ENCODE measurements at regions of chr11 and their contacts with region 1.

Region 1: GRCh38 chr11:77066229-77067042 is at the start of gene CAPN5:
- DNase-seq: peak; percentile 68 to 93 (median 88)
- ATAC-seq: peak; percentile 91
- H3K4me3 ChIP-seq: peak within 1 kb of the TSS; percentile 56 to 87
- H3K4me3 Mint-ChIP-seq: peak within 1 kb of the TSS; percentile 83
- H3K27ac ChIP-seq: peak within 1 kb of the TSS; percentile 32 to 48
- H3K27ac Mint-ChIP-seq: peak within 1 kb of the TSS; percentile 69
- H3K4me1 ChIP-seq: peaks cover 22% of the 10 kb centered on the region
- H3K4me1 Mint-ChIP-seq: peaks cover 25% of the 10 kb centered on the region
- H3K27me3 ChIP-seq: no peaks in the 10 kb centered on the region
- H3K27me3 Mint-ChIP-seq: no peaks in the 10 kb centered on the region
- CTCF ChIP-seq: peak; percentile 40
- total RNA-seq, gene CAPN5: 6.5 to 7.4 TPM

Region 2: DNA sequence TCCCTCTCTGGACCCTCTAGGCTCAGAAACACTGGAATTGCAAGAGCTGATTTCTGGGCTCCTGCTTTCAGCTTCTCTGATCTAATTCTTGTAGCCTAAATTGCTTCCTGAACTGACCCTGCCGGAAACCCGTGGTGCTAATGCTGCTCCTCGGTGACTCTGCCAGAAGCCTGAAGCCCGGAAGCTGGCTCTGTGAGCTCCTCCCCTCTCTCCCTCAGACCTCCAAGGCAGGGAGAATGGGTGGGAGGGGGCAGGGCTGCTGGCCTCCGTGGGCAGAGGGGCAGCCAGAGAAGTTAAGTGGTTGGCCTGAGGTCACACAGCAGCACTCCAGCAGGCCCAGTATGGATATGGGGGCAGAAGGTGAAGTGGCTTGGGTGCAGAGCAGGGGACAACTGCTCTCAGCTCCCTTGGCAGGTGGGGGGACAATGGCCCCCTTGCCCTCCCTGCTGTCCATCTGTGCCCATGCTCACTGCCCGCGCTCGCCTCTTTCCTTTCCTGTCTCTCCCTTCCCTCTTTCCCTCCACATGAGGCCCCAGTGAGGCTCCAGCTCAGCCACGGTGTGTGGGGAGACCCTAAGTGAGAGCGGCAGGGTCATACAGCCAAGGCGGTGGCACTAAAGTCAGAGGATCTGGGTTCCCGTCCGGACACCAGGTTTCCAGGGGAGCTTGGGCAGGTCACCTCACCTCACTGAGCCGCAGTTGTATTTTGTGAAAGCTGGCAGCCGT is 16.6 kb after region 1 on chr11:
- CTCF ChIA-PET with region 1: interaction called, 3 read pairs
- POLR2A ChIA-PET with region 1: interaction called, 3 read pairs
- intact Hi-C with region 1: loop called in 1 of 2 experiments (anchors 1 kb)
- DNase-seq: peak in 8 of 9 experiments; percentile 38 to 76 (median 57)
- ATAC-seq: peak; percentile 93
- H3K4me3 ChIP-seq: peak overlapping the region; percentile 13 to 48
- H3K4me3 Mint-ChIP-seq: peak overlapping the region; percentile 75
- H3K27ac ChIP-seq: peak overlapping the region; percentile 73 to 81
- H3K27ac Mint-ChIP-seq: peak overlapping the region; percentile 97
- H3K4me1 ChIP-seq: peaks cover 25% of the 10 kb centered on the region
- H3K4me1 Mint-ChIP-seq: peaks cover 27% of the 10 kb centered on the region
- H3K27me3 ChIP-seq: no peaks in the 10 kb centered on the region
- H3K27me3 Mint-ChIP-seq: no peaks in the 10 kb centered on the region
- CTCF ChIP-seq: no peak

Region 3: GRCh38 chr11:77411717-77412441 is 345.4 kb after region 1 on chr11:
- CTCF ChIA-PET with region 1: no interaction called
- POLR2A ChIA-PET with region 1: no interaction called
- intact Hi-C with region 1: loop called in 1 of 2 experiments (anchors 5 kb)
- DNase-seq: peak; percentile 58 to 88 (median 80)
- ATAC-seq: peak; percentile 97
- H3K4me3 ChIP-seq: peak overlapping the region; percentile 47 to 71
- H3K4me3 Mint-ChIP-seq: peak overlapping the region; percentile 94
- H3K27ac ChIP-seq: peak overlapping the region; percentile 35 to 55
- H3K27ac Mint-ChIP-seq: peak overlapping the region; percentile 86
- H3K4me1 ChIP-seq: peaks cover 25% of the 10 kb centered on the region
- H3K4me1 Mint-ChIP-seq: peaks cover 44% of the 10 kb centered on the region
- H3K27me3 ChIP-seq: no peaks in the 10 kb centered on the region
- H3K27me3 Mint-ChIP-seq: no peaks in the 10 kb centered on the region
- CTCF ChIP-seq: no peak

Region 4: GRCh38 chr11:77637345-77638165 is 571.1 kb after region 1 on chr11 and contains the start of gene CLNS1A:
- CTCF ChIA-PET with region 1: no interaction called
- POLR2A ChIA-PET with region 1: no interaction called
- intact Hi-C with region 1: loop called in 1 of 2 experiments (anchors 5 kb)
- DNase-seq: peak; percentile 51 to 88 (median 81)
- ATAC-seq: peak; percentile 99
- H3K4me3 ChIP-seq: peak within 1 kb of the TSS; percentile 88 to 91
- H3K4me3 Mint-ChIP-seq: peak within 1 kb of the TSS; percentile 95
- H3K27ac ChIP-seq: peak within 1 kb of the TSS; percentile 62 to 80
- H3K27ac Mint-ChIP-seq: peak within 1 kb of the TSS; percentile 97
- H3K4me1 ChIP-seq: peaks cover 26% of the 10 kb centered on the region
- H3K4me1 Mint-ChIP-seq: peaks cover 43% of the 10 kb centered on the region
- H3K27me3 ChIP-seq: no peaks in the 10 kb centered on the region
- H3K27me3 Mint-ChIP-seq: no peaks in the 10 kb centered on the region
- CTCF ChIP-seq: no peak
- total RNA-seq, gene CLNS1A: 84.6 to 87.5 TPM